ENCODE measurements at regions of chr6 and their contacts with region 1.

Region 1: DNA sequence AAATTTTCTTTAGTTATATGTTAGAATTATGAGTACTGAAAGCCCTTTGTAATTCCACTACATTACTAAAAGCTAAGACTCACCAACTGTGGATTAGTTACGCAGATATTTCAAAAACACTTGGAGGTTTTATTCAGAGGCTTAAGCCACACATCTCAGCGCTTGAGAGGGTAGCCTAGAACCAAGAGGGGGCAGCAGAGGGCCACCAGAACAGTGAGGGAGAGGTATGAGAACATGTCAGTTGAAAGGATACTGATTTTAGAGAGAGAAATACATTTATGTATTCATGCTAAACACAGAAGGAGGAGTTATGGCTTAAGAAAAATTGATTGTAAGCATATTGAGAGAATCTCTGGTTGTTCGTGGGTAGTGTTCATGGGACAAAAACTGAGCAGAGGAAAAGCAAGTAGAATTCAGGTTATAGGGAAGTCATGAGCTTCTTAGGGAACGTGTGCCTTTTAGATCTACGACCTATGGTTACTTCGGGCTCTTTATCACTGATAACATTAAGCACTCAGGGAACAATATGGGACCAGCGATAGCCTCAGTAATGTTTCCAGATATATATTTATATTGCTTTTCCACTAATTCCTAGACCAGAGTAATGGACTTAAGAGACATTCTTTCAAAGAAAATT is 20.4 kb upstream of the SERINC1 start:
- DNase-seq: peak; percentile 77
- H3K4me3 ChIP-seq: no peak overlapping the region
- H3K27ac ChIP-seq: no peak overlapping the region
- H3K4me1 ChIP-seq: peaks cover 0 to 4% (median 0%) of the 10 kb centered on the region in 4 donors
- H3K27me3 ChIP-seq: no peaks in the 10 kb centered on the region
- CTCF ChIP-seq: peak; percentile 65 to 88 (median 77)
- EP300 ChIP-seq: no peak
- POLR2A ChIP-seq: no peak

Region 2: DNA sequence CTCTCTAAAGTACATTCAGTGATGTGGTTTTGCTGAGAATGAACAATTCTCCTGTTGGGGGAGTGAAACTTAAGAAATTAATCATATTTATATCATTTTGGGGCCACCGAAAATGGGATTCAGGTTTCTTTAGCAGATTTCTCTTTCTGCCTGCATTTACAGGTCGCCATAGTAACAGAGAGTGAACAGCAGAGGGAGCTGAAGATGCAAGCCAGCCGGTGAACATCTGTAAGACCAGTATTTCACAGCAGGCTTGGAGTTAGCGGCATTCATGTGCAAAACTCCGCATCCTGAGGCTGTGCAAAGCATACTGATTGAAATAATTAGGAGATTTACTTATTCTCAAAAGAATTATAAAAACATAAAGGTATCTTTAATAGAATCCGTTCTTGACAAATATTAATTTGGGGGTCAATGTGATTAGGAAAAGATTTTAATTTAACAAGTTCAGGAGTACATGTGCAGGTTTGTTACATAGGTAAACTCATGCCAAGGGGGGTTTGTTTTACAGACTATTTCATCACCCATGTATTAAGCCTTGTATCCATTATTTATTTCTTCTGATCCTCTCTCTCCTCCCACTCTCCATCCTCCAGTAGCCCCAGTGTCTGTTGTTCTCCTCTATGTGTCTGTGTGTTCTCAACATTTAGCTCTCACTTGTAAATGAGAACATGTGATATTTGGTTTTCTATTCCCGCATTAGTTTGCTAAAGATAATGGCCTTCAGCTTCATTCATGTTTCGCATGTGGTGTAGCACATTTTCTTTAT is 110.4 kb before region 1 on chr6:
- in situ Hi-C with region 1: no loop called
- intact Hi-C with region 1: no loop called
- DNase-seq: peak; percentile 49
- H3K4me3 ChIP-seq: no peak overlapping the region
- H3K27ac ChIP-seq: no peak overlapping the region
- H3K4me1 ChIP-seq: no peaks in the 10 kb centered on the region
- H3K27me3 ChIP-seq: no peaks in the 10 kb centered on the region
- CTCF ChIP-seq: peak; percentile 66 to 77 (median 72)
- EP300 ChIP-seq: no peak
- POLR2A ChIP-seq: no peak

Region 3: DNA sequence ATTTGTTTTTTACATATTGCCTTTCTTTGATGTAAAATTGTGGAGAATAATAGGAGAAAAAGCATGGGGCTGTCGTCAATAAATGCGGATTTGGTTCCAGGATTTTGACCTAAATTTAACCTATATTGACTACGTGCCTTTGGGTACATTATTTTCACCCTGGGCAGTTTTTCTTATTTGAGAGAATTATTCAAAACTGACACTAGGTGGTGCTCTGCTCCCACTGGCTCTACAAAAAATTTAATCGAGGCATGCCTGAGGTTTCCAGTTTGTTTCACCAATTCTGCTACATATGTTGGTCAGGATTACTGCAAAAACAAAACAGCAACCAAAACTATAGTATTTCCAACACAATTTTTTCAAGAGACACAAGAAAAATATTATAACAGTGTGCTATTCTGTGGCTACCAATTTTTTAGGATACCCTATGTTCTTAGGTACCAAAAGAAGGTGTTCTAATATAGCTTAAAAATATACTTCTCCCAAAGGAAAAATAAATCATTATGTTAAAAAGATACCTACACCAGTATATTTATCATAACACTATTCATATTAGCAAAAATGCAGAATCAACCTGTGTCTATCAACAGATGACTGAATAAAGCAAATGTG is 238.8 kb after region 1 on chr6:
- in situ Hi-C with region 1: loop called in 1 of 4 experiments (anchors 10 kb)
- intact Hi-C with region 1: no loop called
- DNase-seq: no peak
- H3K4me3 ChIP-seq: no peak overlapping the region
- H3K27ac ChIP-seq: no peak overlapping the region
- H3K4me1 ChIP-seq: no peaks in the 10 kb centered on the region
- H3K27me3 ChIP-seq: no peaks in the 10 kb centered on the region
- CTCF ChIP-seq: peak; percentile 67 to 78 (median 75)
- EP300 ChIP-seq: no peak
- POLR2A ChIP-seq: no peak

Measured in transverse colon (tissue), 4 donors.